A673 (cell line): ENCODE measurements at regions of chr10 and their contacts with region 1.

Region 1: DNA sequence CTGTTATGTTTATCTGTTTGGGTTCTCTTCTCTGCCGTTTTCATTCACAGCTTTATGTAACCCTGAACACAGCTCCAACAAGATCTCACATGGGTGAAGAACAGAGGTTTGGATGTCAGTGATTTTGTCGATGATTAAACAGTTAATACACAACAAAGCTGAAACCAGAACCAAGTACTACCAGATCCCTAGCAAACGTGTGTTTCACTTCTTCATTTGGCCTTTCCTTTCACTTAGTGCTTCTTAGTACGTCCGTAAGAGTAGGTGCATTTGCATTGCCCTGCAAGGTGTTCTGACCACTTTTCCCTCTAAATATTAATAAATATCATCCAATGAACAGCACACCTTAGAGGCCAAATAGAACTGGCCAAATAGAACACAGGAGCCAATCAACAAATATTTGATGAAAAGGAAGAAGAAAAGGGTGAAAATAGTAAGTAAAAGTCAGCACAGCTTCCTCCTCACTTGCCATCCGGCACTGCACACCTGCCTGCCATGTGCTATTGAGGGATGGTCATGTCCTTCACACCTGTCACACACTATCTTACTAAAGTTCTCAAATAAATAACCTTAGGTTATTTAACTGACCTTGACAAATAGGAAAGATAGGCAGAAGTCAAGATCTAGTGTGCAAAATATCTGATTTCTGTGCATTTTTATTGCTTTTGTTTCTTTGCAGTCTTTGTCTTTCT is 252.6 kb upstream of the ANKRD30A start:
- DNase-seq: no peak
- H3K4me3 ChIP-seq: no peak overlapping the region
- H3K27ac ChIP-seq: no peak overlapping the region
- H3K4me1 ChIP-seq: no peaks in the 10 kb centered on the region
- H3K27me3 ChIP-seq: no peaks in the 10 kb centered on the region
- CTCF ChIP-seq: no peak

Region 2: DNA sequence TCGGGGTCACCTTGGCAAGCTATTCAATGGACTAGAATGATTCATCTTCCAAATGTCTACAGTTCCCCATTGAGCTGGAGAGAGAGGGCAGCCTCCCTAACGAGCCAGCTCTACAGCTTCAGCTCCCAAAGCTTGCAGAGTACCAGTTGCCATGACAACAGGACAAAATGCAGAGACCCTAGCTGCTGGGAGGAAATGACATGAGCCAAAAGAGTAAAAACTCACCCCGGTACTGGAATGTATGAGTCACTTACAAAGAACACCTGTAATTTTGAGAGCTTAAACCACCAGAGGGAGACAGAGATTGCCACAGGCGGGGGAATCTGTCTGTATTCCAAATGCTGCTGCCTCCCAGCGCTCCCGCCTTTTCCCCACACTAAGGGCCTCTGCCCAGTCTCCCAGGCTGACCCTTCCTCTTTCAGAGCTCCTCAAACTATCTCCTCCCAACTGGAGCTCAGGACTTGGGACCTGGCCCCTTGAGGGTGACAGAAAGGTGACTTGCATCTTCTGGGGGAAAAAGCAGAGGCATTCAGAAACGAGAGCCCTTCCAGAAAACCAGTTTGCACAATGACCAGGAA is 1878.2 kb before region 1 on chr10:
- CTCF ChIA-PET with region 1: no interaction called
- POLR2A ChIA-PET with region 1: no interaction called
- intact Hi-C with region 1: loop called (anchors 10 kb)
- DNase-seq: peak; percentile 77
- H3K4me3 ChIP-seq: no peak overlapping the region
- H3K27ac ChIP-seq: no peak overlapping the region
- H3K4me1 ChIP-seq: no peaks in the 10 kb centered on the region
- H3K27me3 ChIP-seq: no peaks in the 10 kb centered on the region
- CTCF ChIP-seq: peak; percentile 80

Region 3: DNA sequence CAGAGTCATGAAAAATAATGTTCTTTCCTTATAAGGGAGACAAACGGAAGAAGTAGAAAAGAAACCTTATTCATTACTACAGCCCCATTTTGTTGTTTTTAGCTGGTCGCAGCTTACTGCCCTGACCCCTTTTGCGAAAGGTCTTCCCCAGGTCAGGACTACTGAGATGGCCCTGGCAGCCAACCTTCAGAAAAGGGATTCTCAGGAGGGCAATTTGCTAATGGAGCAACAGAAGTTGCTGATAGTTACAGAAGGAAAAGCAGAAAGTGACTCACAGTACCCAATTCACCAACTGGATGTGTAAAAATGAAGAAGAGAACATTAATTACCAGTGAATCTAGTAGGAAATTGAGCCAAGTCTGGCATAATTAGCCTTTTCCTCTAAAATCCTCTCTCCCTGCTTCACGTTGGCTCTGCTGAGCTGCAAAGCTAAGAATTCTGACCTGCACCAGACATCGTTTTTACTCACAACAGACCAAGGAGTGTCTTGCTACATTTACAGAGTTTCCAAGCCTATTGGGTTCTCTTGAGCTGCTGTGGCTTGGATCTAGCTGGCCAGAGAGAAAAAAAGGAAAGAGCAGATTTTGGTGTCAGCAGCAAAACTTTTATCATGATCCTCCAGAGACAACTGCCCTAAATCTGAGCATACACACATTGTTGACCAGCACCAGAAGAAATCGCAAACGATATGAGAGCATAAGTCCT is 730.8 kb before region 1 on chr10:
- CTCF ChIA-PET with region 1: no interaction called
- POLR2A ChIA-PET with region 1: no interaction called
- intact Hi-C with region 1: loop called (anchors 10 kb)
- DNase-seq: peak; percentile 29
- H3K4me3 ChIP-seq: no peak overlapping the region
- H3K27ac ChIP-seq: no peak overlapping the region
- H3K4me1 ChIP-seq: peaks cover 15% of the 10 kb centered on the region
- H3K27me3 ChIP-seq: no peaks in the 10 kb centered on the region
- CTCF ChIP-seq: no peak